Heart left ventricle (tissue), 16 donors: ENCODE measurements at regions of chr3 and their contacts with region 1.

Region 1: DNA sequence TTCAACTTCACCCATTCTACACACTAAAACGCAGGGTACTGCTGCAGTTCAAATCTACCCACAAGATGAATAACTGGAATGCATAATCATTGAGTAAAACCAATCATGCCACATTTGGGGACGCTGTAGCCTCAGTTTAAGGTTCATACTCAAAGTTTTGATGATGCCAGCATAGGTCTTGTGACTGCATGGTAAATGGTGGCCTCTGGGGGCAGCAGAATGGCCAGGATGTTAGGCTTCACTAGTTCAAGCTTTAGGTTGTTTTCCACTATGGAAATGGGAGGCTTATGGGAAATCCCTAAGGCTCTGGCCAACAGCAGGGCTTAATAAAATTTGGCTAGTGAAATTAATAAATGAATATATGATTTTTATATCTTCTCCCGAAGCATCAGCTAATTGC is 104.3 kb upstream of the TSC22D2 start:
- DNase-seq: no peak
- ATAC-seq: no peak
- H3K4me3 ChIP-seq: no peak overlapping the region
- H3K27ac ChIP-seq: no peak overlapping the region
- H3K4me1 ChIP-seq: no peaks in the 10 kb centered on the region
- H3K27me3 ChIP-seq: no peaks in the 10 kb centered on the region
- CTCF ChIP-seq: peak in 5 of 12 donors; percentile 13 to 28 (median 22)
- POLR2A ChIP-seq: no peak

Region 2: DNA sequence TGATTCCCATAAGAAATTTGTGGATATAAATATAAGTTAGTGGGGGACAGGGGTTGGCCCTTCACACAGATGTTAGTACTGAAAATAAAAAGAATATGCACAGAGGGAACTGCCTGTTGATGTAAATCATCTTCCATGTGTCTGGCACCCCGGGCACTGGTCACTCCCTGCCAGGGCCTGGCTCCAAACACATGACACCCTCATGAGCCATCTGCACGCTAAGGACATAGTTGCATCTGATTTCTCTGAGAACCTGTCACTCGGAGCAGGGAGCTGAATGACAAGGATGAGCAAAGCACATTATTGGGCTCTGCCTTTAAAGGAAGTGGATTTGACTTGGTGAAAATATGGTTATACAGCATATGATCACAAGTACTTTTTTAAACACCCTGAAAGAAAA is 38.1 kb after region 1 on chr3:
- intact Hi-C with region 1: loop called in 1 of 10 experiments (anchors 5 kb)
- DNase-seq: peak in 1 of 5 donors; percentile 41
- ATAC-seq: peak in 1 of 4 donors; percentile 58
- H3K4me3 ChIP-seq: no peak overlapping the region
- H3K27ac ChIP-seq: no peak overlapping the region
- H3K4me1 ChIP-seq: peaks cover 0 to 5% (median 0%) of the 10 kb centered on the region in 12 donors
- H3K27me3 ChIP-seq: no peaks in the 10 kb centered on the region
- CTCF ChIP-seq: no peak
- POLR2A ChIP-seq: no peak

Region 3: GRCh38 chr3:150870396-150870795 is 566.6 kb after region 1 on chr3:
- intact Hi-C with region 1: no loop called
- DNase-seq: no peak
- ATAC-seq: peak in 2 of 4 donors; percentile 49 to 73
- H3K4me3 ChIP-seq: no peak overlapping the region
- H3K27ac ChIP-seq: peak overlapping the region in 5 of 12 donors; percentile 27 to 46 (median 42)
- H3K4me1 ChIP-seq: peaks cover 0 to 9% (median 0%) of the 10 kb centered on the region in 12 donors
- H3K27me3 ChIP-seq: no peaks in the 10 kb centered on the region
- CTCF ChIP-seq: no peak
- POLR2A ChIP-seq: no peak